ENCODE measurements at regions of chrX and their contacts with region 1.

Region 1: DNA sequence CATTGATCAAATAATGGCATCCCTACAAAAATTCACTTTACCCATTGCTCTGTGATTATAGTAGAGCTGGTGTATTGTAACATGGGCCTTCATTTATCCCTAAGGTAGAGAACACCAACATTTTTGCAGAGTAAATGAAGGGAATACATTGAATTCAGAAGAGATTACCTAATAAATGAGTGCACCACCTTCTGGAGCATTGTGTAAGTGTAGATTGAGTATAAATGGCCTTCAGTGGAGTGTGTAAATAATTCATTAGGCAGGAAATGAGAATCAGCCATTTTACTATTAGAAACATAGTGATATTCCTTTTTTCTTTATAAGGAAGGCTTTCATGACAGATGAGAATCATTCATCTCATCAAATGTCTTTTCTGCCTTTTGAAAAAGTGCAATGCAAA is 155.8 kb downstream of the FAM47B start:
- DNase-seq: no peak
- ATAC-seq: no peak
- H3K4me3 ChIP-seq: no peak overlapping the region
- H3K27ac ChIP-seq: no peak overlapping the region
- H3K4me1 ChIP-seq: no peaks in the 10 kb centered on the region
- H3K27me3 ChIP-seq: no peaks in the 10 kb centered on the region
- CTCF ChIP-seq: peak; percentile 25; the same call in 1 of the 2 replicates

Region 2: DNA sequence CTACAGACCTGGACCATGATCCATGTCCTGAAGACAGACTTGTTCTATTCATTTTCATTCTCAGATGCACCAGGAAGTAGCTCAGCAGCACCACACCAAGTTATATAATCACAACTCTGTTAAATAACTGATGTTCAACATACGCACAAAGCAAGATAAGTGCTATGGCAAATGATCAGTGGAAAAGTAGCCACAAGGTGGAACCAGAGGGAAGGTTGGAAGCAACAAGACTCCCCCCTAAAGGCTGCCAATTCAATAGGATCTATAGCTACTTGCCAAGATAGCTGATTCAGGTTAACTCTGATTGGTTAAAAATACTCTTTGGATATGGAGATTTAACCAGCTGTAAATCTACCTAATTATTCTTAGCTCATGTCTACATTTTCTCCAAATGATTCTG is 179.6 kb before region 1 on chrX:
- CTCF ChIA-PET with region 1: no interaction called
- POLR2A ChIA-PET with region 1: no interaction called
- intact Hi-C with region 1: loop called (anchors 5 kb)
- DNase-seq: peak; percentile 67
- ATAC-seq: peak; percentile 70
- H3K4me3 ChIP-seq: 0 out of 2 replicates have a peak overlapping the region, but pooled peaks have one; percentile 26
- H3K27ac ChIP-seq: no peak overlapping the region
- H3K4me1 ChIP-seq: peaks cover 14% of the 10 kb centered on the region; the same call in 1 of the 2 replicates
- H3K27me3 ChIP-seq: no peaks in the 10 kb centered on the region
- CTCF ChIP-seq: peak; percentile 71